PC-9 (cell line): ENCODE measurements at regions of chr6 and their contacts with region 1.

Region 1: DNA sequence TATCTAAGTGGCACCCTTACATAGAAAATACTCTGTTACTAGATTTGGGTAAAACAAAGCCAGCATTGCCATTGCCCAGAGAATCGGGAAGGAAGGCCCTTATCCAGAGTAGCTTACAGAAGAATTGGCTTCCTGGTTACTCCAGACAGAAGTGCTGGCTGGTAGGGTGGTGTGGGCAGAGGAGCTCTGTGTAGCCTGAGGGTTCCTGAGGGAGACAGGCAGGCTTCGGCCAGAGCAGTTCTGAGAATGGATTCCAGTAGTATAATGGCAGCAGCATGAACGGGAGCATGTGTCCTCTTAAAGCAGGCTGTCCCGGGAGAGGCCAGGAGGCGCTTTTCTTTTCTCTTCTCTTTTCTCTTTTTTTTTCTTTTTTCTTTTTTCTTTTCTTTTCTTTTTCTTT is 11.9 kb downstream of the CUL9 start:
- DNase-seq: no peak
- H3K4me3 ChIP-seq: no peak overlapping the region
- H3K27ac ChIP-seq: no peak overlapping the region
- H3K4me1 ChIP-seq: no peaks in the 10 kb centered on the region
- H3K27me3 ChIP-seq: no peaks in the 10 kb centered on the region
- CTCF ChIP-seq: no peak

Region 2: GRCh38 chr6:42996513-42996912 is 197.4 kb before region 1 on chr6:
- CTCF ChIA-PET with region 1: no interaction called
- POLR2A ChIA-PET with region 1: interaction called, 13 read pairs
- intact Hi-C with region 1: no loop called
- DNase-seq: no peak
- H3K4me3 ChIP-seq: no peak overlapping the region
- H3K27ac ChIP-seq: no peak overlapping the region
- H3K4me1 ChIP-seq: no peaks in the 10 kb centered on the region
- H3K27me3 ChIP-seq: no peaks in the 10 kb centered on the region
- CTCF ChIP-seq: no peak

Region 3: DNA sequence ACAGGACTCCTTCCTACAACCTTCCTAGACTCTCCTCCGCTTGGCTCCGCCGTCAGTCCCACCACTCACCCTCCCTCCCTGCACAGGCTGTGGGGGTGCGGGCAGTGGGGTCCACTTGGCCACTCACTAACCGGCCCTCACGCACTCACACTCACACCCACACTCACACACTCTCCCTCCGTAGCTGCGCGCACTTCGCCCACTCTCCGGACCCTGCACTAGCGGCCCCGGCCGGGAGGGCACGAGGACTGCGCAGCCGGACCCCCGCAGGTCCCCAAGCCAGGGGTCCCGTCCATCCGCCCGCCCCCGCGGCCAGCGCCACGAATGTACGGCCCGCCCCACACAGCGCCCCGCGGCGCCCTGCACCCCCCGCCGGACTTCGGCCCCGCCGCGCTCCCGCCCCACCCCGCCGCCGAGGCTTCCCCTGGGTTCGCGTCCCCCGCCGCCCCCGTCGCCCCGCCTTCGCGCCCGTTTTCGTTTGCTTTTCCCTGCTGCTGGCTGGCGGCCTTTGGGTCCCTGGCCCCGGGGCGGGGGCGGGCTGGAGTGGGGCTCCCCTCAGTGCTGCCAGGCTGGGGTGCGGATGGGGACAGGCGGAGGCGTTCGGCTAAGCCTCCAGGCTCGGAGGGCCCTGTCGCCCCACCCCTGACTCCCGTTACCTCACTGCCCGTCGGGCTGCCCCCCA is 81.1 kb after region 1 on chr6:
- CTCF ChIA-PET with region 1: no interaction called
- POLR2A ChIA-PET with region 1: no interaction called
- intact Hi-C with region 1: no loop called
- DNase-seq: no peak
- H3K4me3 ChIP-seq: no peak overlapping the region
- H3K27ac ChIP-seq: no peak overlapping the region
- H3K4me1 ChIP-seq: no peaks in the 10 kb centered on the region
- H3K27me3 ChIP-seq: no peaks in the 10 kb centered on the region
- CTCF ChIP-seq: no peak

Region 4: GRCh38 chr6:43629505-43630300 is 435.8 kb after region 1 on chr6:
- CTCF ChIA-PET with region 1: no interaction called
- POLR2A ChIA-PET with region 1: interaction called, 14 read pairs
- intact Hi-C with region 1: no loop called
- DNase-seq: peak; percentile 96 to 97
- H3K4me3 ChIP-seq: peak overlapping the region; percentile 93
- H3K27ac ChIP-seq: peak overlapping the region; percentile 97
- H3K4me1 ChIP-seq: peaks cover 34% of the 10 kb centered on the region
- H3K27me3 ChIP-seq: no peaks in the 10 kb centered on the region
- CTCF ChIP-seq: no peak